CD4-positive, alpha-beta T cell (primary cell): ENCODE measurements at regions of chr6 and their contacts with region 1.

Region 1: DNA sequence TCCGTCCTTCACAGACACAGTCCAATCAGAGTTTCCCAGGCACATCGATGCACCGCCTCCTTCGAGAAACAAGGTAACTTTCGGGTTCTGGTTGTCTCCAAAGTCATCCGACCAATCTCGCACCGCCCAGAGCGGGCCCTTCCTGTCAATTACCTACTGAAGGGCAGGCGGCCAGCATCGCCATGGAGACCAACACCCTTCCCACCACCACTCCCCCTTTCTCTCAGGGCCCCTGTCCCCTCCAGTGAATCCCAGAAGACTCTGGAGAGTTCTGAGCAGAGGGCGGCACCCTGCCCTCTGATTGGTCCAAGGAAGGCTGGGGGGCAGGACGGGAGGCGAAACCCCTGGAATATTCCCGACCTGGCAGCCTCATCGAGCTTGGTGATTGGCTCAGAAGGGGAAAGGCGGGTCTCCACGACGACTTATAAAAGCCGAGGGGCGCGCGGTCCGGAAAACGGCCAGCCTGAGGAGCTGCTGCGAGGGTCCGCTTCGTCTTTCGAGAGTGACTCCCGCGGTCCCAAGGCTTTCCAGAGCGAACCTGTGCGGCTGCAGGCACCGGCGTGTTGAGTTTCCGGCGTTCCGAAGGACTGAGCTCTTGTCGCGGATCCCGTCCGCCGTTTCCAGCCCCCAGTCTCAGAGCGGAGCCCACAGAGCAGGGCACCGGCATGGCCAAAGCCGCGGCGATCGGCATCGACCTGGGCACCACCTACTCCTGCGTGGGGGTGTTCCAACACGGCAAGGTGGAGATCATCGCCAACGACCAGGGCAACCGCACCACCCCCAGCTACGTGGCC is at the start of gene HSPA1B:
- DNase-seq: peak; percentile 64 to 93 (median 84)
- ATAC-seq: peak; percentile 66
- H3K4me3 ChIP-seq: peak within 1 kb of the TSS; percentile 84
- H3K4me3 Mint-ChIP-seq: peak within 1 kb of the TSS; percentile 96
- H3K27ac ChIP-seq: peak within 1 kb of the TSS; percentile 74 to 76
- H3K27ac Mint-ChIP-seq: peak within 1 kb of the TSS; percentile 97
- H3K4me1 ChIP-seq: peaks cover 43% of the 10 kb centered on the region
- H3K4me1 Mint-ChIP-seq: peaks cover 43% of the 10 kb centered on the region
- H3K27me3 ChIP-seq: no peaks in the 10 kb centered on the region
- H3K27me3 Mint-ChIP-seq: no peaks in the 10 kb centered on the region
- CTCF ChIP-seq: no peak
- total RNA-seq, gene HSPA1B: 8.3 to 9.8 TPM

Region 2: GRCh38 chr6:31476515-31477139 is 350.9 kb before region 1 on chr6:
- CTCF ChIA-PET with region 1: no interaction called
- POLR2A ChIA-PET with region 1: no interaction called
- intact Hi-C with region 1: no loop called
- DNase-seq: no peak
- ATAC-seq: no peak
- H3K4me3 ChIP-seq: no peak overlapping the region
- H3K4me3 Mint-ChIP-seq: no peak overlapping the region
- H3K27ac ChIP-seq: no peak overlapping the region
- H3K27ac Mint-ChIP-seq: no peak overlapping the region
- H3K4me1 ChIP-seq: peaks cover 24% of the 10 kb centered on the region
- H3K4me1 Mint-ChIP-seq: peaks cover 38% of the 10 kb centered on the region
- H3K27me3 ChIP-seq: no peaks in the 10 kb centered on the region
- H3K27me3 Mint-ChIP-seq: no peaks in the 10 kb centered on the region
- CTCF ChIP-seq: no peak

Region 3: DNA sequence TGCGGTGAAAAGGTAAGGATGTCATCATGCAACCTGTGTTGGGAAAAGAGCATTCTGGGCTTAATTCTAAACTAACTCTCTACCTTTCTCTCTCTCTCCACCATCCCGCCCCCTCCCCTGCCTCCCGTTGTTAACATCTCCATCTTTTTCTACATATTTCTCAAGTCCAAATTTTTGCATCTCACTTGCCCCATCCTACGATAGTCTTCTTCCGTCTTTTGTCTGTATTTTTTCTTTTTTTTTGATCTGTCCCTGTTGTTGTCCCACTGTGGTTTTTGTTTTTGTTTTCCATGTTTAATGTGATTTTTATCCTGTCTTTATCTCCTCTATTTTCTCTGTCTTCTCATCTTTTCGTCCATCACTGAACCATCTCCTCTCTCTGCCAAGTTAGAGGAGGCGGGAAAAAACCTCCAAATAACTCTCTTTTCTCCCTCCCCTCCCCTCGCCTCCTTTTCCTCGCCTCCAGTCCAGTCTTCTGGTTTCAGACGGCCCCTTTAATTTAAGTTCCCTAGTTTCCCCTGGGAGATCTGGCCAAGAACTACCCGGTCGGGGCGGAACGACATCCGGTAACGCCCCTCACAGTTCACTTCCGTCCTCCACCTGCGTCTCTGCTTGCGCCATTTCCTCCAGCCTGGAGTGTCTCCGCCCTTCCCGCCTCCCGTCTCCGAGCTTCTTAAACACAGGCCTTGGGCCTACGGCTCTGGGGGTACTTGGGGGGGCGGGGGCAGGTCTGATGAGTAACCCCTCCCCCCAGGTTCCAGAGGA is 280.3 kb before region 1 on chr6 and contains the start of gene NFKBIL1:
- CTCF ChIA-PET with region 1: interaction called, 4 read pairs
- POLR2A ChIA-PET with region 1: interaction called, 6 read pairs
- intact Hi-C with region 1: loop called (anchors 2 kb)
- DNase-seq: peak; percentile 74 to 95 (median 84)
- ATAC-seq: peak; percentile 78
- H3K4me3 ChIP-seq: peak within 1 kb of the TSS; percentile 62
- H3K4me3 Mint-ChIP-seq: peak within 1 kb of the TSS; percentile 86
- H3K27ac ChIP-seq: peak within 1 kb of the TSS; percentile 72 to 89
- H3K27ac Mint-ChIP-seq: peak within 1 kb of the TSS; percentile 84
- H3K4me1 ChIP-seq: peaks cover 47% of the 10 kb centered on the region
- H3K4me1 Mint-ChIP-seq: peaks cover 41% of the 10 kb centered on the region
- H3K27me3 ChIP-seq: no peaks in the 10 kb centered on the region
- H3K27me3 Mint-ChIP-seq: no peaks in the 10 kb centered on the region
- CTCF ChIP-seq: peak; percentile 21
- total RNA-seq, gene NFKBIL1: 7.6 to 9.3 TPM

Region 4: GRCh38 chr6:31680840-31681671 is 146.4 kb before region 1 on chr6 and contains the start of gene LY6G5C:
- CTCF ChIA-PET with region 1: interaction called, 4 read pairs
- POLR2A ChIA-PET with region 1: interaction called, 5 read pairs
- intact Hi-C with region 1: loop called in 1 of 2 experiments (anchors 2 kb)
- DNase-seq: peak in 13 of 14 experiments; percentile 45 to 83 (median 61)
- ATAC-seq: peak; percentile 71
- H3K4me3 ChIP-seq: peak within 1 kb of the TSS; percentile 79
- H3K4me3 Mint-ChIP-seq: peak within 1 kb of the TSS; percentile 87
- H3K27ac ChIP-seq: peak within 1 kb of the TSS in 1 of 2 donors; percentile 44
- H3K27ac Mint-ChIP-seq: peak within 1 kb of the TSS; percentile 35
- H3K4me1 ChIP-seq: peaks cover 21% of the 10 kb centered on the region
- H3K4me1 Mint-ChIP-seq: peaks cover 19% of the 10 kb centered on the region
- H3K27me3 ChIP-seq: no peaks in the 10 kb centered on the region
- H3K27me3 Mint-ChIP-seq: no peaks in the 10 kb centered on the region
- CTCF ChIP-seq: peak; percentile 71
- total RNA-seq, gene LY6G5C: 0.49 to 0.67 TPM

Region 5: DNA sequence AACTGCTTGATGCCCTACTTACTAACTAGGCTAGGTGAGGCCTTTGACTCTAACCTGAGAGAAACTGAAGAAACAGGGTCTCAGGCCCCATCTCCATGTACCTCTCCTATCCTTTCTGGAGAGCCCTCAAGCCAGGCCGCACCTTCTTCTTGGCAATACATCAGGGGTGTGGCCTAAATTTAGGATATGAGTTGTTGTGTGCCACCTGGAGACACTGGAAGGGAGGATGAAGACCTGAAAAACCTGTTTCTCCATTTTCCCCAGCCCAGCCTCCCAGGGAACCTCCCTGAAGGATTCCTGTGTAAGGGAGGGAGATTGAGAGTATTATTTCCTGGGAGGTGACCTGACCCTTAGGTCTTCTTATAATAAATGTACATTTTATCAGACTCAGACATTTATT is 109.2 kb before region 1 on chr6:
- CTCF ChIA-PET with region 1: no interaction called
- POLR2A ChIA-PET with region 1: no interaction called
- intact Hi-C with region 1: no loop called
- DNase-seq: no peak
- ATAC-seq: no peak
- H3K4me3 ChIP-seq: no peak overlapping the region
- H3K4me3 Mint-ChIP-seq: no peak overlapping the region
- H3K27ac ChIP-seq: no peak overlapping the region
- H3K27ac Mint-ChIP-seq: no peak overlapping the region
- H3K4me1 ChIP-seq: peaks cover 5% of the 10 kb centered on the region
- H3K4me1 Mint-ChIP-seq: peaks cover 6% of the 10 kb centered on the region
- H3K27me3 ChIP-seq: no peaks in the 10 kb centered on the region
- H3K27me3 Mint-ChIP-seq: no peaks in the 10 kb centered on the region
- CTCF ChIP-seq: no peak

Region 6: DNA sequence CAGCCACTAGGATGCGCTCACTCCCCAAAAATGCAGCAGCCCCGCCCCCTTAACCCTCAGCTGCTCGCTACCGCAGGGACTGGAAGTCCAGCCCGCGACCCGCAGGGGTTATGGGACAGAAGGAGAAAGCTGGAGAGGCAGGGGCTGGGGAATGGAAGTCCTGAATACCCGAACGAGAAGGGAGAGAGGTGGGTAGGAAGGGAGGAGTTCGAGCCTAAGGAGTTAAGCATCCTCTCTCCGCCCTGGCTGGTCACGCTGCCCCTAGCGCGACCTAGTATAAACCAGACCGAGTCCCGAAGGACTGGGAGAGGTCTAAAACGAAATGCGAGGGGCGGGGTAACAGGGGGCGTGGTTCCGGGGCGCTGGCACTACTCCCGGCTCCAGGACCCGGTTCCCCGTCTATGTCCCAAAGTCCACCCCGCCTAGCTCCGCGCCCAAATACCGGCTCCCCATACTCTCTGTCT is 97.9 kb before region 1 on chr6:
- CTCF ChIA-PET with region 1: interaction called, 16 read pairs
- POLR2A ChIA-PET with region 1: interaction called, 15 read pairs
- intact Hi-C with region 1: loop called (anchors 1 kb)
- DNase-seq: peak; percentile 69 to 90 (median 77)
- ATAC-seq: peak; percentile 76
- H3K4me3 ChIP-seq: peak overlapping the region; percentile 77
- H3K4me3 Mint-ChIP-seq: peak overlapping the region; percentile 98
- H3K27ac ChIP-seq: peak overlapping the region; percentile 45 to 68
- H3K27ac Mint-ChIP-seq: peak overlapping the region; percentile 61
- H3K4me1 ChIP-seq: peaks cover 66% of the 10 kb centered on the region
- H3K4me1 Mint-ChIP-seq: peaks cover 67% of the 10 kb centered on the region
- H3K27me3 ChIP-seq: no peaks in the 10 kb centered on the region
- H3K27me3 Mint-ChIP-seq: no peaks in the 10 kb centered on the region
- CTCF ChIP-seq: peak; percentile 89

Region 7: GRCh38 chr6:31795616-31796298 is 31.7 kb before region 1 on chr6 and contains the start of gene VARS1:
- CTCF ChIA-PET with region 1: interaction called, 8 read pairs
- POLR2A ChIA-PET with region 1: interaction called, 18 read pairs
- intact Hi-C with region 1: loop called (anchors 2 to 5 kb)
- DNase-seq: peak; percentile 69 to 94 (median 80)
- ATAC-seq: peak; percentile 79
- H3K4me3 ChIP-seq: peak within 1 kb of the TSS; percentile 77
- H3K4me3 Mint-ChIP-seq: peak within 1 kb of the TSS; percentile 97
- H3K27ac ChIP-seq: peak within 1 kb of the TSS; percentile 81 to 90
- H3K27ac Mint-ChIP-seq: peak within 1 kb of the TSS; percentile 54
- H3K4me1 ChIP-seq: peaks cover 49% of the 10 kb centered on the region
- H3K4me1 Mint-ChIP-seq: peaks cover 38% of the 10 kb centered on the region
- H3K27me3 ChIP-seq: no peaks in the 10 kb centered on the region
- H3K27me3 Mint-ChIP-seq: no peaks in the 10 kb centered on the region
- CTCF ChIP-seq: peak; percentile 76
- total RNA-seq, gene VARS1: 43.9 to 44.2 TPM

Region 8: DNA sequence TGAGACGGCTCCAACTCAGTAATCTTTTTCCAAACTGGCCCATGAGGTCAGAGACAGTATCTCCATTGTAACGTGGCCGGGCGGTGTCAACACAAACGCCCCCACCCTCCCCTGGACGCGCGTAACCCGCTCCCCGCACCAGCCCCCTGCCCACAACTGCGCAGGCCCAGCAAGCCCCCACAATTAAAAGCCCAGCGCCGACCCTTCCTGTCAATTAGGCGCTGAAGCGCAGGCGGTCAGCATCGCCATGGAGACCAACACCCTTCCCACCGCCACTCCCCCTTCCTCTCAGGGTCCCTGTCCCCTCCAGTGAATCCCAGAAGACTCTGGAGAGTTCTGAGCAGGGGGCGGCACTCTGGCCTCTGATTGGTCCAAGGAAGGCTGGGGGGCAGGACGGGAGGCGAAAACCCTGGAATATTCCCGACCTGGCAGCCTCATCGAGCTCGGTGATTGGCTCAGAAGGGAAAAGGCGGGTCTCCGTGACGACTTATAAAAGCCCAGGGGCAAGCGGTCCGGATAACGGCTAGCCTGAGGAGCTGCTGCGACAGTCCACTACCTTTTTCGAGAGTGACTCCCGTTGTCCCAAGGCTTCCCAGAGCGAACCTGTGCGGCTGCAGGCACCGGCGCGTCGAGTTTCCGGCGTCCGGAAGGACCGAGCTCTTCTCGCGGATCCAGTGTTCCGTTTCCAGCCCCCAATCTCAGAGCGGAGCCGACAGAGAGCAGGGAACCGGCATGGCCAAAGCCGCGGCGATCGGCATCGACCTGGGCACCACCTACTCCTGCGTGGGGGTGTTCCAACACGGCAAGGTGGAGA is 12.3 kb before region 1 on chr6 and contains the starts of genes HSPA1A and HSPA1L:
- CTCF ChIA-PET with region 1: interaction called, 10 read pairs
- POLR2A ChIA-PET with region 1: interaction called, 23 read pairs
- intact Hi-C with region 1: no loop called
- DNase-seq: peak in 11 of 14 experiments; percentile 25 to 76 (median 60)
- ATAC-seq: peak; percentile 11
- H3K4me3 ChIP-seq: peak within 1 kb of the TSS; percentile 70
- H3K4me3 Mint-ChIP-seq: peak within 1 kb of the TSS; percentile 90
- H3K27ac ChIP-seq: peak within 1 kb of the TSS; percentile 75 to 81
- H3K27ac Mint-ChIP-seq: peak within 1 kb of the TSS; percentile 83
- H3K4me1 ChIP-seq: peaks cover 49% of the 10 kb centered on the region
- H3K4me1 Mint-ChIP-seq: peaks cover 47% of the 10 kb centered on the region
- H3K27me3 ChIP-seq: no peaks in the 10 kb centered on the region
- H3K27me3 Mint-ChIP-seq: no peaks in the 10 kb centered on the region
- CTCF ChIP-seq: no peak
- total RNA-seq, gene HSPA1A: 8.1 to 9.8 TPM
- total RNA-seq, gene HSPA1L: 1.7 to 1.8 TPM